ENCODE measurements at regions of chr4 and their contacts with region 1.

Region 1: GRCh38 chr4:87006676-87007527 is 72.1 kb downstream of the AFF1 start:
- DNase-seq: peak; percentile 93 to 97 (median 96)
- ATAC-seq: peak; percentile 96 to 97
- H3K4me3 ChIP-seq: peak overlapping the region; percentile 90
- H3K27ac ChIP-seq: peak overlapping the region; percentile 97
- H3K4me1 ChIP-seq: peaks cover 2% of the 10 kb centered on the region
- H3K27me3 ChIP-seq: no peaks in the 10 kb centered on the region

Region 2: GRCh38 chr4:86927843-86928395 is 79.0 kb before region 1 on chr4:
- intact Hi-C with region 1: loop called in 1 of 4 experiments (anchors 10 kb)
- DNase-seq: peak in 1 of 3 donors; percentile 50
- ATAC-seq: peak; percentile 61 to 86
- H3K4me3 ChIP-seq: no peak overlapping the region
- H3K27ac ChIP-seq: no peak overlapping the region
- H3K4me1 ChIP-seq: peaks cover 2% of the 10 kb centered on the region
- H3K27me3 ChIP-seq: no peaks in the 10 kb centered on the region

Region 3: GRCh38 chr4:86934771-86935565 is 71.9 kb before region 1 on chr4 and contains the start of gene AFF1:
- intact Hi-C with region 1: loop called in 3 of 4 experiments (anchors 5 kb)
- DNase-seq: peak; percentile 95 to 98 (median 97)
- ATAC-seq: peak; percentile 94 to 96
- H3K4me3 ChIP-seq: peak within 1 kb of the TSS; percentile 85
- H3K27ac ChIP-seq: peak within 1 kb of the TSS; percentile 91
- H3K4me1 ChIP-seq: peaks cover 5% of the 10 kb centered on the region
- H3K27me3 ChIP-seq: no peaks in the 10 kb centered on the region
- total RNA-seq, gene AFF1: 76.6 to 86.6 (median 84.1) TPM

Region 4: GRCh38 chr4:87043044-87043820 is 36.3 kb after region 1 on chr4:
- intact Hi-C with region 1: loop called in 1 of 4 experiments (anchors 5 kb)
- DNase-seq: no peak
- ATAC-seq: no peak
- H3K4me3 ChIP-seq: no peak overlapping the region
- H3K27ac ChIP-seq: peak overlapping the region; percentile 33
- H3K4me1 ChIP-seq: peaks cover 39% of the 10 kb centered on the region
- H3K27me3 ChIP-seq: no peaks in the 10 kb centered on the region

Region 5: DNA sequence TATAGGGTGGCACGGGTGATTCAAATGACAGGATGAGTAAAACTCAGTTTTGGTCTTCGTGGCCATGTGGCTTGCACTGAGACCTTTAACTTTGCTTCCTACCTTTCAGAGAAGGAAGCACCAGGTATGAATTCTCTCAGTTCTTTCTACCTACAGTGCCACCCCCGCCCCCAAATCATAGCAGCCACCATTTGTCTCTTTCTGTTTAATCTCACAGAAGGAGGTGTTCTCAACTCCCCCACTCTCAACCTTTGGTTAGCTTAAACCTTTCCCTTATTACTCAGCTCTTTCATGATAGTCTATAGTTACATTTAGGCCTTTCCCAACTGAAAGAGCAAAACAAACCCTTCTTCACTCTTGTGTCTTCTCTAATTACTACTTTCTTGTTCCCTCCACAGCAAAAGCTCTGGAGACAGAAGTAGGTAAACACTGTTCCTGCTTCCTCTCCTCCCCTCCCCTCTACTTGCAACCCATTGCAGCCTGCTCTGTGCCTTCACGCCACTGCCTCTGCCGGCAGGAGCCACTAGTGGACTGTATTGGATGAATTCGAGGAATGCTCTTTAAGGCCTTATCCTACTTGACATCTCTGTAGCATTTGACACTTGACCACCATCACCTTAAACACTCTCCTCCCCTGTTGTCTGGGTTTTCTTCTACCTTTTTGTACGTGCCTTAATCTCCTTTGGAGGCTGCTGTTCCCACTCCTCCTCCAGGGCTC is 51.6 kb after region 1 on chr4:
- intact Hi-C with region 1: loop called in 1 of 4 experiments (anchors 10 kb)
- DNase-seq: peak in 1 of 3 donors; percentile 73
- ATAC-seq: peak in 1 of 2 donors; percentile 41
- H3K4me3 ChIP-seq: no peak overlapping the region
- H3K27ac ChIP-seq: peak overlapping the region; percentile 75
- H3K4me1 ChIP-seq: peaks cover 25% of the 10 kb centered on the region
- H3K27me3 ChIP-seq: no peaks in the 10 kb centered on the region

Region 6: GRCh38 chr4:87087420-87087819 is 80.5 kb after region 1 on chr4:
- intact Hi-C with region 1: loop called (anchors 5 to 10 kb)
- DNase-seq: no peak
- ATAC-seq: peak in 1 of 2 donors; percentile 26
- H3K4me3 ChIP-seq: no peak overlapping the region
- H3K27ac ChIP-seq: no peak overlapping the region
- H3K4me1 ChIP-seq: peaks cover 11% of the 10 kb centered on the region
- H3K27me3 ChIP-seq: no peaks in the 10 kb centered on the region

Region 7: DNA sequence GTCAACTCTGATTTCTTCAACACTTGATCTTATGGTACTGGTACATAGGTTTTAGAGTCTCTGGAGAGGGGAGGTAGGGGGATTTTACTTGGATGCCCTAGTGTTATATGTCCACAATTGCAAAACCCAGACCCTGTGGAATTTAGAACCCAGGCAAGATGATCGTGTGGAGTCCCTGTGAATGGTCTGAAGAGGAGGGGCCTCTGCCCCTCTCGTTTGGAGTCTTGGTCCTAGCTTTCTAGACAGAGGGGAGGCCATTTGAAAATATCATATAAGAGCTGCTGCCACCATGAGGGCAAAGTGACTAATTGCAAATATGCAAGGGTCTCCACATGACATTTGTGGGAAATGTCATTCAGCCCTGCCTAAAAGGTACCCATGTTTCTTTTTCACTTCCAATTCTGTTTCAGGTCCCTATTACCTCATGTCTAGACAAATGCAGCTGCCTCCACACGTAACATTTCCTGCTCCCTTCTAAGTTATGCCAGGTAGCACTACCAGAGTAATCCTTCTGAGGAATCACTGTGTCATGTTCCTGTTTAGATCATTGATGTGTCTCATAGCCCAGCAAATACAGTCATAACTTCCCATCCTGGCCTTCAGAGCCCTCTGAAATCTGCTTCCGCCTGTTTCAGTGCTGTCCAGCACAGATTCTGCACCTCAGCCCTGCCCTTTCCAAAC is 86.7 kb after region 1 on chr4:
- intact Hi-C with region 1: loop called (anchors 5 to 10 kb)
- DNase-seq: no peak
- ATAC-seq: peak; percentile 69 to 77
- H3K4me3 ChIP-seq: no peak overlapping the region
- H3K27ac ChIP-seq: peak overlapping the region; percentile 12
- H3K4me1 ChIP-seq: peaks cover 5% of the 10 kb centered on the region
- H3K27me3 ChIP-seq: no peaks in the 10 kb centered on the region

Region 8: DNA sequence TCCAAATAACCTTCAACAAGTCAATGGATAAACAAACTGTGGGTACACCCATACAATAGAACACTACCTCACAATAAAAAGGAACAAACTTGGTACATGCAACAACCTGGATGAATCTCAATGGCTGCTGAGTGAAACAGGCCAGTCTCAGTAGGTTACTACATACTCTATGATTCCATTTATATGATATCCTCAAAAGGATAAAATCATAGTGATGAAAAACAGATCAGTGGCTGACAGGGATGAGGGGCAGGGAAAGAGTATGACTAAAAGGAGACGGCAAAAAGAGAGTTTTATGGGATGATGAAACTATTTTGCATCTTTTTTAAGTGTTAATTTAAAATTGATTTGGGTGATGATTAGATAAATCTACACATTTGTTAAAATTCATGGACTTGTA is 197.7 kb after region 1 on chr4:
- intact Hi-C with region 1: no loop called
- DNase-seq: no peak
- ATAC-seq: no peak
- H3K4me3 ChIP-seq: no peak overlapping the region
- H3K27ac ChIP-seq: no peak overlapping the region
- H3K4me1 ChIP-seq: peaks cover 1% of the 10 kb centered on the region
- H3K27me3 ChIP-seq: no peaks in the 10 kb centered on the region

Measured in right cardiac atrium (tissue), 5 donors.